Activated naive CD4-positive, alpha-beta T cell treated with anti-CD3 and anti-CD28 coated beads for 36 hours (primary cell): ENCODE measurements at regions of chr12 and their contacts with region 1.

Region 1: DNA sequence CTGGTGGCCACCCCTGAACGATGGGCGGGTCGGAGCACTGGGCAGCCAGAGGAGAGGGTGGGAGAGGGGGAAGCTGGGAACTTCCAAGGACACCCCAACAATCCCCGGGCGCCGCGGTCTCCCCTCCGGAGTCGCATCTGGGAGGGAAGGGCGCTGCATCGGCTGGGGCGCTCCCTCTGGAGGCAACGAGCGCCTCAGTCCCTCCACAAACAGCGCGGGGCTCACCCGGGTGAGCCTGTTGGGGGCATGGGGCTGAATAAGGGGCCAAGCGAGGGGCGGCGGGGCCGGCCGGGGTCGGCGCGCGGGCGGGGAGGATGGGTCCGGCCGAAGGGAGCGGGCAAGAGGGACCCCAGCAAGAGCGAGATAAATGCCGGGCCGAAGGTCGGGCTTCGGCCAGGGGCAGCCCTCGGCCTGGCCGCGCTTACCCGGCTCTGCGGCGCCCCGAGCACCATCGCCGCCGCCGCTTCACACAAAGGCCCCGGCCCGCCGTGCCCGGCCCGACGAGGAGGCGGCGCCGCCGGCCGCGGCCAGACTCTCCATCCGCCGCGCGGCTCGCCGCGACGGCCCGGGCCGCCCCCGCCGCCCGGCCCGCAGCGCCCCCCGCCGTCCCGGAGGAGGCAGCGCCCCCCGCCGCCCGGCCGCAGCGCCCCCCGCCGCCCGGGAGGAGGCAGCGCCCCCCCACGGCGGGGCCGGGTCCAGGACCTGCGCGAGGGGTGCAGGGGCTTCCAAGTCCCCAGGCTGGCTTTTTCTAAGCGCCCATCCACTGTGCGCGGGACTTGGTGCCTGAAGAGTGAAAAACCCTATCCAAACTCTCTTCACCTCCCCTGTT is at the start of gene ZBTB39:
- DNase-seq: peak; percentile 59
- H3K4me3 Mint-ChIP-seq: peak within 1 kb of the TSS; percentile 92
- H3K27ac Mint-ChIP-seq: peak within 1 kb of the TSS; percentile 90
- H3K4me1 Mint-ChIP-seq: peaks cover 72% of the 10 kb centered on the region
- H3K27me3 Mint-ChIP-seq: no peaks in the 10 kb centered on the region
- total RNA-seq, gene ZBTB39: 5.1 to 5.5 TPM

Region 2: GRCh38 chr12:56751712-56752598 is 254.2 kb before region 1 on chr12 and contains the start of gene PRIM1:
- CTCF ChIA-PET with region 1: interaction called, 87 read pairs
- intact Hi-C with region 1: loop called (anchors 1 kb)
- DNase-seq: peak; percentile 90
- H3K4me3 Mint-ChIP-seq: peak within 1 kb of the TSS; percentile 98
- H3K27ac Mint-ChIP-seq: peak within 1 kb of the TSS; percentile 99
- H3K4me1 Mint-ChIP-seq: peaks cover 40% of the 10 kb centered on the region
- H3K27me3 Mint-ChIP-seq: no peaks in the 10 kb centered on the region
- total RNA-seq, gene PRIM1: 74.9 to 75.0 TPM

Region 3: DNA sequence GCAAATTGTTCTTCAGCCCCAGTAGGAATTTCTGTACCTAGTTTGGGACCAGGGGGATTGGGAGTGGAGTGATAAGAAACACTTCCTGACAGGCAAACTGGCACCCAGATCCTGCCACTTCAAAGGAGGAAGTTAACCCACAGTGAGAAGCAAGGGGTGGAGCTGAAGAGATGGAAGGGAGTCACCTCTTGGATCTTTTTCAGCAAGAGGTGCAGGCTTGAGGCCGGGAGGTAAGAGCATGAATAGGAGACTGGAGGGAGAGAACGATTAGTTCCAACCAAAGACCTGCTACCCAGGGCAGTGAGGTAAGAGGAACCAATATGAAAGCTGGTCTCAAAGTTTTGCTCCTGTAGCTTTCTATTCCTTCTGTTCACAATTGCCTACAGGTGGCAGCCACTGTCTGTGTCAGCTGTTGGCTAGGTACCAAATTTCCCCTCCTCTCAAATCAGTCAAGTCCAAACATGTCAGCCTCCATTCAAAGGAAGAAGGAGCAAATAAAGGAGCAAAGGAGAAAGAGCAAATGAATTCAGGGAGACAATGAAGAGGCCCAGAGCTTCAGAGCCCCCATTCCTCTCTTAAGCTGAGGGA is 25.0 kb after region 1 on chr12:
- CTCF ChIA-PET with region 1: interaction called, 25 read pairs
- intact Hi-C with region 1: no loop called
- DNase-seq: peak; percentile 64
- H3K4me3 Mint-ChIP-seq: peak overlapping the region; percentile 2
- H3K27ac Mint-ChIP-seq: peak overlapping the region; percentile 42
- H3K4me1 Mint-ChIP-seq: peaks cover 55% of the 10 kb centered on the region
- H3K27me3 Mint-ChIP-seq: no peaks in the 10 kb centered on the region

Region 4: GRCh38 chr12:57069523-57069922 is 63.3 kb after region 1 on chr12:
- CTCF ChIA-PET with region 1: interaction called, 271 read pairs
- intact Hi-C with region 1: loop called (anchors 1 kb)
- DNase-seq: peak; percentile 76
- H3K4me3 Mint-ChIP-seq: peak overlapping the region; percentile 23
- H3K27ac Mint-ChIP-seq: peak overlapping the region; percentile 93
- H3K4me1 Mint-ChIP-seq: peaks cover 71% of the 10 kb centered on the region
- H3K27me3 Mint-ChIP-seq: no peaks in the 10 kb centered on the region

Region 5: DNA sequence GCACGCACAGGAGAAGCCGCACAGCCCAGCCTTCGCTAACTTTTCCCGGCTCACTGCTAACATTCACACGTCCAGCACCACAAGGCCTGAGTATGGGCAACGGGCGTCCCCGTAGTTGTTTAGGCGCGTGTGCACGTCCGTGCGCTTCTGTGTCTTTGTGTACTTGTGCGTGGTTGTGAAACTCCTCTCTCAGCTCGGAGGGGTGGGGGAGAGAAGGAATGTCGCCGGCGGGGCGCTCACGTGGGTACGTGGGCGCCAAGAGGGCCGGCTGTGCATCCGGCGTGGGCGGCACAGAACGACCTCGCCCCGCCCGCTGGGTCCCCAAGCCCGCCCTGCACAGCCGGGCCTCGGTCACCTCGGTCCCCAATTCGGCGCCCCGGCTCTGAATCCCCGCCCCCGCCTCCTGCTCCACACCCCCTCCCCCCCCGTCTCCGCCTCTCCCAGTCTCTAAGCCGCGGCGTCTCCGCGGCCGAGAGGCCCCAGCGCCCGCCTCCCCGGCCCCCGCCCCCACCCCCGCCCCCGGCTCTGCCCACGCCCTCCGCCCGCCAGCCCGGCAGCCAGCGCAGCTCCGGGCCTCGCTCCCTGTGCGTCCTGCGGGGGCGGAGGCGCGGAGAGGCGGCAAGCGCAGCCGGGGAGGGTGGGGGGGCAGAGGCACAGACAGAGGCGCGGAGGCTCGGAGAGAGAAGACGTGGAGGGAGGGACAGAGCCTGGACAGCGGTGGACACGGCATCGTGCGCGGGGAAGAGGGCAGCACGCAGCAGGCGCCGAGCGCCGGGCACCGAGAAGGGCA is 82.5 kb after region 1 on chr12 and contains the start of gene NAB2:
- CTCF ChIA-PET with region 1: interaction called, 16 read pairs
- intact Hi-C with region 1: loop called (anchors 1 kb)
- DNase-seq: peak; percentile 92
- H3K4me3 Mint-ChIP-seq: peak within 1 kb of the TSS; percentile 91
- H3K27ac Mint-ChIP-seq: peak within 1 kb of the TSS; percentile 99
- H3K4me1 Mint-ChIP-seq: peaks cover 61% of the 10 kb centered on the region
- H3K27me3 Mint-ChIP-seq: no peaks in the 10 kb centered on the region
- total RNA-seq, gene NAB2: 18.4 to 19.1 TPM